H1 (cell line): ENCODE measurements at regions of chr20 and their contacts with region 1.

Region 1: GRCh38 chr20:13784893-13785715 is at the starts of genes ESF1 and NDUFAF5:
- DNase-seq: peak; percentile 94 to 95
- H3K4me3 ChIP-seq: peak within 1 kb of the TSS; percentile 73 to 97 (median 78)
- H3K27ac ChIP-seq: peak within 1 kb of the TSS; percentile 84
- H3K4me1 ChIP-seq: peaks cover 0 to 4% (median 1%) of the 10 kb centered on the region in 4 experiments; a peak in 2 of 7 replicates
- H3K27me3 ChIP-seq: no peaks in the 10 kb centered on the region
- CTCF ChIP-seq: no peak
- EP300 ChIP-seq: 0 out of 3 replicates have a peak, but pooled peaks of 1 of the 2 experiments have one; percentile 17
- POLR2A ChIP-seq: peak; percentile 77 to 95
- RAD21 ChIP-seq: no peak
- total RNA-seq, gene ESF1: 31.1 and 32.9 TPM in 2 replicates
- total RNA-seq, gene NDUFAF5: 26.7 and 32.3 TPM in 2 replicates

Region 2: GRCh38 chr20:13610184-13610583 is 174.9 kb before region 1 on chr20:
- CTCF ChIA-PET with region 1: interaction called, 12 read pairs
- POLR2A ChIA-PET with region 1: interaction called, 4 read pairs
- DNase-seq: no peak
- H3K4me3 ChIP-seq: no peak overlapping the region
- H3K27ac ChIP-seq: no peak overlapping the region
- H3K4me1 ChIP-seq: no peaks in the 10 kb centered on the region
- H3K27me3 ChIP-seq: no peaks in the 10 kb centered on the region
- CTCF ChIP-seq: peak; percentile 66 to 76 (median 68)
- EP300 ChIP-seq: no peak
- POLR2A ChIP-seq: no peak
- RAD21 ChIP-seq: peak; percentile 87 to 91

Region 3: DNA sequence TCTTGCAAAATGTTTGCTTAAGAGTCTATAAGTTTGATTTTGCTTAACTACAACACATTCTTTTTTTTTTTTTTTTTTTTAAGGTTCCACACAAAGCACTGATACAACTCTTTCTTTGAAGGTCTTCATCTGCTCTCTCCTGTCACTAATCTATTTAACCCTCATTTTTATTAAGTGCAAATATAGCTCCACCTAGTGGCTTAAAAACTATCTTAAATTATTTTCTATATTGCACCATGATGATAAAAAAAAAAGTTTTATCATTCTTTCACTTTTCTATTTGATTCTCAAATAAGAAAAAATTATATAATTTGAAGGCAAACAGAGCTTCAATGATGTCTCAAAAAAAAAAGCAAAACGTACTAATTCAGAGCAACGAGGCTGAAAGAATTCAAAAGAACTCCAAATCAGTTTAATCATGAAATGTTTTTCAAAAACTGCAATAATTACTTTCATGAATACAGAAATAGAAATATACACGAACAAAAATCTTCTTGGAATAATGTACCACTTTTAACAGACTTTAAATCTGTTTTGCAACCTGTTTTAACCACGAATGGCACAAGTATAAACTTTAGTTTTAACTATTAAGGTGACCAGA is 13.2 kb before region 1 on chr20:
- CTCF ChIA-PET with region 1: interaction called, 12 read pairs
- POLR2A ChIA-PET with region 1: interaction called, 8 read pairs
- DNase-seq: no peak
- H3K4me3 ChIP-seq: no peak overlapping the region
- H3K27ac ChIP-seq: no peak overlapping the region
- H3K4me1 ChIP-seq: no peaks in the 10 kb centered on the region
- H3K27me3 ChIP-seq: peaks cover 0 to 1% (median 0%) of the 10 kb centered on the region in 4 experiments; a peak in 1 of 7 replicates
- CTCF ChIP-seq: no peak
- EP300 ChIP-seq: no peak
- POLR2A ChIP-seq: no peak
- RAD21 ChIP-seq: no peak

Region 4: DNA sequence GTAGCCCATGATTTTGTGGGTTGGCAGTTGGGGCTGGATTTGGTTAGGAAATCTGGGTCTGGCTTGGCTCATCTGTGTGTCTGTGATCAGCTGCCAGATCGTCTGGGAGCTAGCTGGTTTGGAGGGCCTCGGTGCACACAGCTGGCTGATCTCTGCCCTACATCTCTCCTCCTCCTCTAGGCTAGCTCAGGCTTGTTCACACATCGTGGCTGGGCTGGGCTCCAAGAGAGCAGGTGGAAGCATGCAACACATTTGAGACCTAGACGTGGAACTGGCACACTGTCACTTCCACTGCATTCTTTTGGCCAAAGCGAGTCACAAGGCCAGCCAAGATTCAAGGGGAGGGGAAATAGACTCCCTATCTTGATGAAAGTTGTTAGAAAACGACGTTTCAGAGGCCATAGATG is 15.6 kb after region 1 on chr20:
- CTCF ChIA-PET with region 1: interaction called, 14 read pairs
- POLR2A ChIA-PET with region 1: interaction called, 28 read pairs
- DNase-seq: no peak
- H3K4me3 ChIP-seq: no peak overlapping the region
- H3K27ac ChIP-seq: no peak overlapping the region
- H3K4me1 ChIP-seq: no peaks in the 10 kb centered on the region
- H3K27me3 ChIP-seq: no peaks in the 10 kb centered on the region
- CTCF ChIP-seq: no peak
- EP300 ChIP-seq: no peak
- POLR2A ChIP-seq: no peak
- RAD21 ChIP-seq: no peak

Region 5: DNA sequence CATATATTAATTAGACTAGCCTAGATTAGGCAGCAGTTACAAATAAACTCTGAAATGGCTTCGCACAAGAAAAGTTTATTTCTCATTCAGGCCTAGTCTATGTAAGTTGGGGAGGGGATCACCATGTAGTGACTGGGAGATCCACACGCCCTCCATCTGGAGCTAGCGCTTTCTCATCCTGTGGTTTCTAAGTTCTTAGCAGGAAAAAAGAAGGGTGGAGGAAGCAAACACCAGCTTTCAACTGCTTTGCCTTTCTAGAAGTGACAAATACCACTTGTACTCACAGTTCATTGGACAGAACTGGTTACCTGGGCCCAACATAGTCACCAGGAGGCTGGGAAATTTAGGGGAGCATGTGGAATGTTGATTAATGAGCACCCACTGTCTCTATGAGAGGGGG is 46.4 kb after region 1 on chr20:
- CTCF ChIA-PET with region 1: no interaction called
- POLR2A ChIA-PET with region 1: no interaction called
- DNase-seq: no peak
- H3K4me3 ChIP-seq: no peak overlapping the region
- H3K27ac ChIP-seq: no peak overlapping the region
- H3K4me1 ChIP-seq: no peaks in the 10 kb centered on the region
- H3K27me3 ChIP-seq: no peaks in the 10 kb centered on the region
- CTCF ChIP-seq: no peak
- EP300 ChIP-seq: no peak
- POLR2A ChIP-seq: no peak
- RAD21 ChIP-seq: no peak